T-cell (primary cell): ENCODE measurements at regions of chr1 and their contacts with region 1.

Region 1: DNA sequence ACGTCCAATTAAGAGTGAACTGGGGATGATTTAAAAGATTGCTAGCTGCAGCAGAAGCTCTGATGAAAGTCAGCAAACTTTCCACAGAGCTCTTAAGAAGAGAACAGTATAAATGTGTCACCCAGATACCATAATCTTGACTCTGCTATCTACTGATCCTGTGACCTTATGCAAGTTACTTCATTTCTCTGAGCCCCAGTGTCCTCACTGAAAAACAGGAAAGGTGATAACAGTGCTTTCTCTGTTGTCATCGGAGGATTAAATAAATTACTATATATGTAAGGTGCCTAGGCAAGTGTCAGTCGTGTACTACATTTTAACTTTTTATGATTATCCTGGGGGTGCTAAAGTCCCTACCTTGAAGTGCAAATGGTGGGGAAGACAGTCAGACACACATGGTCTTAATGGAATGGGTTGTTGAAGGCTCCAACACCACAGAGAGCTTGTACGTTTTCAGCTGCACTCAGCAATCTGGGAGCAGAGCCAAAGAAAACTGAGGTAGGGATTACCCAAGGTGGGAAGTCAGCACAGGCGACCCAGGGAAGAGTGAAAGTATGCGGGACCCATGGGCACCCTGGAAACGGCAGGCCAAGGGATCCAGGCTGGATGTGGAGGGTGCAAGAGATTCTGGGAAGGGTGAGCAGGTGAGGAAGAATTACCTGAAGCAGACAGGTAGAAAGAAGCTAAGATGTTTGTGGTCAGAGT is 82.8 kb downstream of the DTL start:
- DNase-seq: no peak
- ATAC-seq: no peak
- H3K4me3 ChIP-seq: no peak overlapping the region
- H3K4me3 Mint-ChIP-seq: no peak overlapping the region
- H3K27ac ChIP-seq: no peak overlapping the region
- H3K27ac Mint-ChIP-seq: no peak overlapping the region
- H3K4me1 ChIP-seq: peaks cover 0 to 2% of the 10 kb centered on the region in 2 experiments
- H3K4me1 Mint-ChIP-seq: peaks cover 0 to 10% (median 3%) of the 10 kb centered on the region in 3 donors
- H3K27me3 ChIP-seq: no peaks in the 10 kb centered on the region
- H3K27me3 Mint-ChIP-seq: no peaks in the 10 kb centered on the region

Region 2: DNA sequence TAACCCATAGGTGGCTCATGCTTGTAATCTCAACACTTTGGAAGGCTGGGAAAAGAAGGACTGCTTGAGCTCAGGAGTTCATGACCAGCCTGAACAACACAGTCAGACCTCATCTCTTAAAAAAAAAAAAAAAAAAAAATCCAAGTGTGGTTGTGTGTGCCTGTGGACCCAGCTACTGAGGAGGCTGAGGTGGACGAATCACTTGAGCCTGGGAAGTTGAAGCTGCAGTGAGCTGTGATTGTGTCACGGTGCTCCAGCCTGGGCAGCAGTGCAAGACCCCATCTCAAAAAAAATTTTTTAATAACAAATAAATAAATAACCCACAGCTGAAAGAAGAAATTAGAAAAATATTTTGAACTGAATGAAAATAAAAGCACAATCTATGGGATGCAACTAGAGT is 96.8 kb before region 1 on chr1:
- CTCF ChIA-PET with region 1: no interaction called
- POLR2A ChIA-PET with region 1: no interaction called
- DNase-seq: no peak
- ATAC-seq: no peak
- H3K4me3 ChIP-seq: no peak overlapping the region
- H3K4me3 Mint-ChIP-seq: no peak overlapping the region
- H3K27ac ChIP-seq: no peak overlapping the region
- H3K27ac Mint-ChIP-seq: no peak overlapping the region
- H3K4me1 ChIP-seq: no peaks in the 10 kb centered on the region
- H3K4me1 Mint-ChIP-seq: peaks cover under 1 to 4% (median 2%) of the 10 kb centered on the region in 3 donors
- H3K27me3 ChIP-seq: no peaks in the 10 kb centered on the region
- H3K27me3 Mint-ChIP-seq: no peaks in the 10 kb centered on the region

Region 3: GRCh38 chr1:212368073-212368484 is 249.8 kb after region 1 on chr1:
- CTCF ChIA-PET with region 1: interaction called in 1 of 2 experiments, 11 read pairs
- POLR2A ChIA-PET with region 1: no interaction called
- DNase-seq: peak in 33 of 35 experiments; percentile 19 to 78 (median 38)
- ATAC-seq: peak; percentile 65 to 80 (median 77)
- H3K4me3 ChIP-seq: no peak overlapping the region
- H3K4me3 Mint-ChIP-seq: no peak overlapping the region
- H3K27ac ChIP-seq: no peak overlapping the region
- H3K27ac Mint-ChIP-seq: no peak overlapping the region
- H3K4me1 ChIP-seq: peaks cover 0 to 3% of the 10 kb centered on the region in 2 experiments
- H3K4me1 Mint-ChIP-seq: peaks cover 0 to 5% (median 2%) of the 10 kb centered on the region in 3 donors
- H3K27me3 ChIP-seq: no peaks in the 10 kb centered on the region
- H3K27me3 Mint-ChIP-seq: no peaks in the 10 kb centered on the region